Aorta (tissue), 5 donors: ENCODE measurements at regions of chr6 and their contacts with region 1.

Region 1: GRCh38 chr6:43070028-43070632 is 6.0 kb upstream of the PTK7 start:
- DNase-seq: no peak
- ATAC-seq: no peak
- H3K4me3 ChIP-seq: no peak overlapping the region
- H3K27ac ChIP-seq: no peak overlapping the region
- H3K4me1 ChIP-seq: no peaks in the 10 kb centered on the region
- H3K27me3 ChIP-seq: no peaks in the 10 kb centered on the region

Region 2: DNA sequence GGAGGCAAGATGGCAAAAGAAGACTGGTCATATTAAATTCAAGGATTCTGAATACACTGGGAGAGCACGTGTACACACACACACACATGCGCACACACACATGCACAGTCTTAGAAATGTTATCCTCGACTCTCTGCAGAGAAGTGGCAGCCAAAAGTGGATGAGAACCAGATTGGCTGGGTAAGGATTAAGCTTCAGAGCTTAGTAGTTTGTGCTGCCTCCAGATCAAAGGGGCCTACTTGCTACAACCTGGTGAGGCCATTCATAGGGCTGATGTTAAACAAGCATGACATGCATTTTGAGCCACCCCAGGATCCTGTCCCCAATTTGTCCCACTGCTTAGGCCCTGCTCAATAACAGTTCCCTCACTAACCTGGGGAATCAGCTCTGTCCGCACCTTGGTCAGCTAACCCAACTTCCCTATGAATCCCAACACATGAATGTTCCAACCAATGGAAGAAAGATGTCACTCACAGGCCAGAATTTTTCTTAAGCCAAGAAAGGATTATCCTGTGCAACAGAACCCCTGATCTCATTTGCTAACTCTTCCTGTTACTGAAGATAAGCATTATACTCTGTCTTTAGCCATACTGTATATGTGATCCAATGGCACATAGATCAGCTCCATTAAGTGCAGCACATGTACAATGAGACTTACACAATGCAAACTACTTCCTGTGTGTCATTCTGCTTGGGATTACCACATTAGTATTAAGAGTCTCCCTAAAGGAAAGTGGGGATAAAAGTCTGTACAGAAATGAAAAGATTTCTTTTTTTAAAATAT is 1251.7 kb before region 1 on chr6:
- intact Hi-C with region 1: no loop called
- DNase-seq: no peak
- ATAC-seq: no peak
- H3K4me3 ChIP-seq: no peak overlapping the region
- H3K27ac ChIP-seq: no peak overlapping the region
- H3K4me1 ChIP-seq: no peaks in the 10 kb centered on the region
- H3K27me3 ChIP-seq: no peaks in the 10 kb centered on the region

Region 3: GRCh38 chr6:43009124-43009523 is 61.0 kb before region 1 on chr6:
- intact Hi-C with region 1: no loop called
- DNase-seq: no peak
- ATAC-seq: no peak
- H3K4me3 ChIP-seq: no peak overlapping the region
- H3K27ac ChIP-seq: no peak overlapping the region
- H3K4me1 ChIP-seq: no peaks in the 10 kb centered on the region
- H3K27me3 ChIP-seq: no peaks in the 10 kb centered on the region

Region 4: GRCh38 chr6:43129434-43130194 is 59.5 kb after region 1 on chr6:
- intact Hi-C with region 1: loop called (anchors 2 to 5 kb)
- DNase-seq: no peak
- ATAC-seq: peak; percentile 70
- H3K4me3 ChIP-seq: no peak overlapping the region
- H3K27ac ChIP-seq: no peak overlapping the region
- H3K4me1 ChIP-seq: no peaks in the 10 kb centered on the region
- H3K27me3 ChIP-seq: no peaks in the 10 kb centered on the region

Region 5: DNA sequence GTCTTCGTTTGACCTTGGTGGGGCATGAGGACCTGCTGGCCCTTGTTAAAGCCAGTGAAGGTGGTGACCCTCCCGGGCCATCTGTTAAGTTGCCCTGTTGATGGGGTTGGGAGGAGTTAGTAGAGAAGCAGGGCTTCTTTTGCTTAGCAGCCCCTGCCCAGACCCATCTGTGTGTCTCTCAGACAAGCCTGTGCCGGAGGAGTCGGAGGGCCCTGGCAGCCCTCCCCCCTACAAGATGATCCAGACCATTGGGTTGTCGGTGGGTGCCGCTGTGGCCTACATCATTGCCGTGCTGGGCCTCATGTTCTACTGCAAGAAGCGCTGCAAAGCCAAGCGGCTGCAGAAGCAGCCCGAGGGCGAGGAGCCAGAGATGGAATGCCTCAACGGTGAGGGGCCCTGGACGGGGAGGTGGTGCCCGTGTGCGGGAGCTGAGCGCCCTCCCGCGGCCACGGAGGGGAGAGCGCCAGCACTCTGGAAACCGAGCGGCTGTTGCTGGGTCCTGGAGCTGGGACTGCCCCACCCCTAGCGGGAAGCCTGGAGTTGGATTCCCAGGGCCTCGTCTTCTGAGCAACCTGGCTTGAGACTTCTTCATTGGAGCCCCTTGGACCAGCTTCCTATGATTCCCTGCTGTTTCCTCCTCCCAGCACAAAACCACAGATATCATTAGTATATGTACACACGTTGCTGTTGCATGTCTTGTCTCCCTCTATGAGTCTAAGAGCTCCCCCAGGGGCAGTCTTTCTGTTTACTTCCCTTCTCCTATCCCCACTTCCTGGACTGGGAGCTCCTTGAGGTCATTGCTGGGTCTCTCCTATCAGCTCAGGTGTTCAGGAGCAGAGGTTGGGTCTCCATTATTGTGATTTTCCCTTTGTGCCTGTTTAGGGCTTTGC is 73.3 kb after region 1 on chr6:
- intact Hi-C with region 1: loop called in 1 of 2 experiments (anchors 5 kb)
- DNase-seq: peak; percentile 91 to 95
- ATAC-seq: peak; percentile 96
- H3K4me3 ChIP-seq: no peak overlapping the region
- H3K27ac ChIP-seq: no peak overlapping the region
- H3K4me1 ChIP-seq: no peaks in the 10 kb centered on the region
- H3K27me3 ChIP-seq: no peaks in the 10 kb centered on the region